A549 (cell line): ENCODE measurements at regions of chr15 and their contacts with region 1.

Region 1: DNA sequence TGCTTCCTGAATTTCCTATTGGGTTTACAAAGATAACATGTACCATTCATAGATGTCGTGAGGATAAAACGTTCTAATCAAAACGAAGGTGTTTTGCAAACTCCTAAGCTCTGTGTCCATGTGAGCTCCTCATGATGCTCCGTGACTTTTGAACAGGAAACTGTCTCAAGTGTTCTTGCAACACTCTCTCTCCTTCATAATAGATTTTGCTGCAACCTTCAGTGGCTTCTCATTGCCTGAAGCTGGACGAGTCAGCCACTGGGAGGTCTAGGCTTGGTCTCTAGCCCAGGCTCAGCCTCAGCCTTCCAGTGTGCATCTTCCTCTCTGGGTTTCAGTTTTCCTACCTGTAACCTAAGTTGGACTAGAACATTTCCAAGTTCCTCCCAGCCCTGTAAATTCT is 18.7 kb upstream of the BCL2A1 start:
- DNase-seq: no peak
- ATAC-seq: peak; percentile 41 to 53; a peak in 4 of 6 replicates
- H3K4me3 ChIP-seq: no peak overlapping the region
- H3K27ac ChIP-seq: peak overlapping the region in 1 of 2 experiments; percentile 5; a peak in 1 of 6 replicates
- H3K4me1 ChIP-seq: peaks cover 3% of the 10 kb centered on the region; the same call in 2 of the 3 replicates
- CTCF ChIP-seq: no peak
- EP300 ChIP-seq: no peak
- POLR2A ChIP-seq: no peak
- RAD21 ChIP-seq: no peak

Region 2: GRCh38 chr15:79853458-79854328 is 136.0 kb before region 1 on chr15:
- CTCF ChIA-PET with region 1: interaction called, 47 read pairs
- POLR2A ChIA-PET with region 1: no interaction called
- DNase-seq: peak; percentile 71 to 90
- ATAC-seq: peak; percentile 98 to 99
- H3K4me3 ChIP-seq: no peak overlapping the region
- H3K27ac ChIP-seq: peak overlapping the region; percentile 10 to 42; a peak in 4 of 6 replicates
- H3K4me1 ChIP-seq: peaks cover 14% of the 10 kb centered on the region
- CTCF ChIP-seq: peak; percentile 98
- EP300 ChIP-seq: no peak
- POLR2A ChIP-seq: no peak
- RAD21 ChIP-seq: peak; percentile 91 to 92

Region 3: GRCh38 chr15:79896637-79897379 is 92.9 kb before region 1 on chr15 and contains the start of gene MTHFS:
- CTCF ChIA-PET with region 1: interaction called, 55 read pairs
- POLR2A ChIA-PET with region 1: interaction called, 3 read pairs
- DNase-seq: peak; percentile 83 to 92
- ATAC-seq: peak; percentile 96 to 98
- H3K4me3 ChIP-seq: peak within 1 kb of the TSS; percentile 65
- H3K27ac ChIP-seq: peak within 1 kb of the TSS; percentile 93 to 98
- H3K4me1 ChIP-seq: peaks cover 37% of the 10 kb centered on the region
- CTCF ChIP-seq: peak; percentile 74
- EP300 ChIP-seq: no peak
- POLR2A ChIP-seq: peak; percentile 95
- RAD21 ChIP-seq: peak; percentile 60 to 85
- polyA plus RNA-seq, gene MTHFS: 125 and 158 TPM in 2 replicates

Region 4: DNA sequence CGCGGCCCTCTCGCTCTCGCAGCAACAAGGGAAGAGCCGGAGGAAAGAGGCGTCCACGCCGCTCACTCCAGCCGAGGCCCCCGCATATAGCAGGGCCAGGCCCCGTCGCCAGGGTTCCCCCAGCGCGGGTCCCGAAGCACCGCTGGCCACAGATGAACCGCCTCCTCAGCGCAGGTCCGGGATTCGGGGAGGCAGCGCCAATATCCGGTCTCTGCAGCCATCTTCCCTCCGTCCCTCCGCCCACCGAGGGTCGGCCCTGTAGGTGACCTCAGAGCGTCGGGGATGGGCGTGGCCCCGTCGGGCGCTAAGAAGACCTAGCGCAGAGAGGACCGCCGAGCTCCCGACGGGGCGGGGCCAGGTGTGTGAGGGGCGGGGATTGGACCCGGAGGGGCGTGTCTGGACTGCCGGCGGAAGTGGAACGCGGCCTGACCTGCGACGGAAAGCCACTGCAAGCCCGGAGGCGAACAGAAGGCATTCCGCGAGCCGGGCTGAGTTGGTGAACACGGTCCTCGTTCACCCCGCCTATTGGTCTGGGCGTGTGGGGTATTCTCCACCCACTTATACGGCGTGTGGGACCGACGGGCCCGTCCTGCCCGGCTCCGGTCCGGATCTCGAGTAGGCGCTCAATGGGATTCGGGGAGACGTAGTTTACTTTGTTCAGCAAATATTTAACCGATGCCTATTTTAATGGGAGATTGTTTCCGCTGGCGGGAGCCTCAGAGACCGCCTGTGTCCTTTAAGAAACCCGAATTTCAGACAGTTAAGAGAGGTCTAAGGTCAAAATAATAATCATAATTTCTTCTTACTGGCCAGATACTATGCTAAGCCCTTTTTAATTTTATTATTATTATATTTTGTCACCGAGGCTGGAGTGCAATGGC is 65.9 kb before region 1 on chr15:
- CTCF ChIA-PET with region 1: interaction called, 29 read pairs
- POLR2A ChIA-PET with region 1: interaction called, 9 read pairs
- DNase-seq: peak; percentile 98 to 99
- ATAC-seq: peak; percentile 97
- H3K4me3 ChIP-seq: peak overlapping the region; percentile 90
- H3K27ac ChIP-seq: peak overlapping the region; percentile 96 to 97
- H3K4me1 ChIP-seq: no peaks in the 10 kb centered on the region; the same call in 2 of the 3 replicates
- CTCF ChIP-seq: no peak
- EP300 ChIP-seq: no peak
- POLR2A ChIP-seq: peak; percentile 92
- RAD21 ChIP-seq: no peak; a peak in 1 of 5 replicates

Region 5: DNA sequence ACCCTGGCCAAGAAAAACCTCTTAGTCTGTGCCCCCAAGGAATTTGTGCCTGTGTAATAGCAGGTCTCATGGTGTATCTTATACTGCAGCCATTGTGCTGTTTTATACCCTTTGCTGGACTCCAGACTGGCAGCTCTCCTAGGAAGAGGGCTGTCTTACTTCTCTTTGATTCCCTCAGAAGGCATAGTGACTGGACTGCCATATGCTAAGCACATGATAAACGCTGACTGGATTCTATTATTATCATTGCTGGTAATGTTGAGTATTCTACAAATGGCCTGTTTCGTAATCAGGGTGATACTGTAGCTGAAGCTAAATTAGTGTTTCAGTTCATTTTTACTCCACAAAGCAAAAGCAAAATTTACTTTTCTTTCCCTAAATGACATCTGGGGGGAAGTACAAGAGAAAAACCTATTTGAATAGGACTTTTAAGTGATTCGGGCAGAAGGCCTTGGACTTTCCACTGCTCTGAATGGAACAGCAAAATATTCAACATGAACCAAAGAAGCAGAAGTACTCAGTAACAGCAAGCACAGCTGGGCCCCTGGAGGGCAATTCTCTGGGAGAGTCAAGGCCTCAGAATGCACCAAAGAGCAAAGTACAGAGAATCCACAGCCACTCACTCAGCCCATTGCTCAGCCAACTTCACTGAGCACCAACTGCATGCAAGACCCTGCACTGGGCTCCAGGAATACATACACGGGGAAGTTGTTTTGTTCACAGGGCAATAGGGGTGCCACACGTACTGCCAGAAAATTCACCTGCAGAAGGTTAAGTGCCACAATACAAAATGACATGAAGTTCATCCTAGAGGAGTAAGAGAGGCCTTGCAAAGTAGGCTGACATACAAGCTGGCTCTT is 10.8 kb before region 1 on chr15:
- CTCF ChIA-PET with region 1: interaction called, 21 read pairs
- POLR2A ChIA-PET with region 1: no interaction called
- DNase-seq: no peak
- ATAC-seq: peak; percentile 45 to 57; a peak in 3 of 6 replicates
- H3K4me3 ChIP-seq: no peak overlapping the region
- H3K27ac ChIP-seq: peak overlapping the region in 1 of 2 experiments; percentile 31; a peak in 2 of 6 replicates
- H3K4me1 ChIP-seq: peaks cover 16% of the 10 kb centered on the region
- CTCF ChIP-seq: no peak
- EP300 ChIP-seq: no peak
- POLR2A ChIP-seq: no peak
- RAD21 ChIP-seq: no peak

Region 6: GRCh38 chr15:80007532-80007931 is 17.9 kb after region 1 on chr15:
- CTCF ChIA-PET with region 1: interaction called, 22 read pairs
- POLR2A ChIA-PET with region 1: no interaction called
- DNase-seq: no peak
- ATAC-seq: no peak
- H3K4me3 ChIP-seq: no peak overlapping the region
- H3K27ac ChIP-seq: no peak overlapping the region
- H3K4me1 ChIP-seq: peaks cover 19% of the 10 kb centered on the region
- CTCF ChIP-seq: no peak
- EP300 ChIP-seq: no peak
- POLR2A ChIP-seq: no peak
- RAD21 ChIP-seq: no peak